OCI-LY7 (cell line): ENCODE measurements at regions of chr12 and their contacts with region 1.

Region 1: GRCh38 chr12:6533923-6534694 is at the start of gene GAPDH:
- DNase-seq: peak; percentile 99
- H3K4me3 ChIP-seq: peak within 1 kb of the TSS; percentile 93
- H3K27ac ChIP-seq: peak within 1 kb of the TSS; percentile 95
- H3K4me1 ChIP-seq: peaks cover 47% of the 10 kb centered on the region
- CTCF ChIP-seq: no peak
- total RNA-seq, gene GAPDH: 3,369 and 3,801 TPM in 2 replicates

Region 2: GRCh38 chr12:5898876-5899275 is 635.2 kb before region 1 on chr12:
- CTCF ChIA-PET with region 1: no interaction called
- POLR2A ChIA-PET with region 1: no interaction called
- intact Hi-C with region 1: no loop called
- DNase-seq: no peak
- H3K4me3 ChIP-seq: no peak overlapping the region
- H3K27ac ChIP-seq: no peak overlapping the region
- H3K4me1 ChIP-seq: no peaks in the 10 kb centered on the region
- CTCF ChIP-seq: peak; percentile 47

Region 3: DNA sequence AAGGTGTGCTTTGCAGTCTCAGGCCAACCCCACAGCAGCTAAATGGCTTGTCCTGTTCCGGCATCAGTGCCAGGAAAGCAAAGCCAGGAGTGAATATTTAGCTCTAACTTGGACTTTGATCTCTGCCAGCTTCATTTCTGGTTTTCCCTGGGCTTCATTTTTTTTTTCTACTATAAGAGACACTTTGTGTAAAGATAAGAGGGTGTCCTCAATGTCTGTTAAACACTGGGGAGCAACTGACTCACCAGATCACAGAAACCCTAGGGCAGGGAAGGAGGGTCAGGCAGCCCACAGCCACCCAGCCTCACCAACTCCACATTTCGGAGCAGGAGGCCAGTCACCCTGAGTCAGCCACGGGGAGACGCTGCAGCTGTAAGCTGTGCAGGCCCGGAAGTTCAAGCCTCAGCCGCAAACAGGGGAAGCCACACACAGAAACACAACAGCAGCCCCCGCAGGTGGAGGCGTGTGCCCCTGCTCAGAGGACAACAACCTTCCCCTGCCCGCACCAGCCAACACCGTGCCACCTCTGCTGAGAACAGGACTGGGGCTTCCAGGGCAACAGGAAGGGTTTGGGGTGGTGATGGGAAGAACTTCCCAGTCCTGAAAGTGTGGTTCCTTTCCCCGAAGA is 198.5 kb before region 1 on chr12:
- CTCF ChIA-PET with region 1: no interaction called
- POLR2A ChIA-PET with region 1: no interaction called
- intact Hi-C with region 1: loop called (anchors 5 kb)
- DNase-seq: peak; percentile 90
- H3K4me3 ChIP-seq: peak overlapping the region; percentile 53
- H3K27ac ChIP-seq: peak overlapping the region; percentile 80
- H3K4me1 ChIP-seq: peaks cover 72% of the 10 kb centered on the region
- CTCF ChIP-seq: peak; percentile 89

Region 4: DNA sequence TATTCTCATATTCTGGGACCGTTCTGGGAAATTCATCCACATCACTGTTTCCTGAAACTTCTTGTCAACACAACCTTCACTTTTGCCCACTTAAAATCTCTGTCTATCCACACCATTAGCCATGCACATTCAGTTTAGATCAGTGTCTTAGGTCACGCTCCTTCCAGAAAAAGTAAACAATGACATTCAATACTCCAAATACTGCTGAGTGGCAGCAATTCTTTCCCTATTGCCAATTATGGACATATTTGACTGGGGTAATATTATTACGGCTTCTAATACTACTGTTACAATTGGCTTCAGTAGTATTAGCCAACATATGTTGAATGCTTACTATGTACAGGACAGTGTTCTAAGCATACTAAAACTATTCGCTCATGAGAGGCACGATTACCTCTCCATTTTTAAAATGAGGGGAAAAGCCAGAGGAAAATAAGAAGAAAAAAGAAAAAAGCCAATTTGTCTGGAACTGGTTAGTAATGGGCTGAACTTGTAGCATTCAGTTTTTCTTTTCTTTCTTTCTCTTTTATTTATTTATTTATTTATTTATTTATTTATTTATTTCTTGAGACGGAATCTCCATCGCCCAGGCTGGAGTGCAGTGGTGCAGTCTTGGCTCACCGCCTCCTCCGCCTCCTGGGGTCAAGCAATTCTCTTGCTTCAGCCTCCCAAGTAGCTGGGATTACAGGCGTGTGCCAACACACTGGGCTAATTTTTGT is 126.7 kb before region 1 on chr12:
- CTCF ChIA-PET with region 1: no interaction called
- POLR2A ChIA-PET with region 1: no interaction called
- intact Hi-C with region 1: no loop called
- DNase-seq: no peak
- H3K4me3 ChIP-seq: no peak overlapping the region
- H3K27ac ChIP-seq: no peak overlapping the region
- H3K4me1 ChIP-seq: no peaks in the 10 kb centered on the region
- CTCF ChIP-seq: no peak

Region 5: GRCh38 chr12:6493497-6494257 is 40.4 kb before region 1 on chr12 and contains the start of gene NCAPD2:
- CTCF ChIA-PET with region 1: interaction called, 3 read pairs
- POLR2A ChIA-PET with region 1: interaction called, 14 read pairs
- intact Hi-C with region 1: loop called (anchors 1 kb)
- DNase-seq: peak; percentile 98
- H3K4me3 ChIP-seq: peak within 1 kb of the TSS; percentile 91
- H3K27ac ChIP-seq: peak within 1 kb of the TSS; percentile 96
- H3K4me1 ChIP-seq: peaks cover 37% of the 10 kb centered on the region
- CTCF ChIP-seq: peak; percentile 40; the same call in 1 of the 2 replicates
- total RNA-seq, gene NCAPD2: 157 and 195 TPM in 2 replicates

Region 6: DNA sequence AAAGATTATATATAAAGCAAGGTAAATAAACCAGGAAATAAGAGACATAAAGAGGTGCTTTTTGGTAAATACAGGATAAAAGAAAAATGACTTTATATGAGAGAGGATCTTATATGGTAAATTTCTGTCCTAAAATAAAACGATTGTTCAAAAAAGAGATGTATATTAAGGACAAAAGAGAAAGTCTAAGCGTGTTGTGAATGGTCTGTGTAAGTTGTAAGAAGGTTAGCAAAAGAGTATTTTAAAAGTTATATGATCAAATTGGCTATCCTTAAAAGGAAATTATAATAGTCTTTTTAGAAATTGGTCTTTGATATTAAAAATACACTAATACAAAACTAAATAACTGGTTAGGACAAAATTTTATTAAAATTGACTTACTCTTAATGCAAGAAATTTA is 755.6 kb after region 1 on chr12:
- CTCF ChIA-PET with region 1: no interaction called
- POLR2A ChIA-PET with region 1: no interaction called
- intact Hi-C with region 1: no loop called
- DNase-seq: peak; percentile 36
- H3K4me3 ChIP-seq: no peak overlapping the region
- H3K27ac ChIP-seq: no peak overlapping the region
- H3K4me1 ChIP-seq: no peaks in the 10 kb centered on the region
- CTCF ChIP-seq: no peak